Dendritic cell treated with granulocyte-macrophage colony-stimulating factor and Interleukin-4, amounts not matched to agents 40 ng/mL and 50 ng/mL, for 4 days (primary cell): ENCODE measurements at regions of chr18 and their contacts with region 1.

Region 1: DNA sequence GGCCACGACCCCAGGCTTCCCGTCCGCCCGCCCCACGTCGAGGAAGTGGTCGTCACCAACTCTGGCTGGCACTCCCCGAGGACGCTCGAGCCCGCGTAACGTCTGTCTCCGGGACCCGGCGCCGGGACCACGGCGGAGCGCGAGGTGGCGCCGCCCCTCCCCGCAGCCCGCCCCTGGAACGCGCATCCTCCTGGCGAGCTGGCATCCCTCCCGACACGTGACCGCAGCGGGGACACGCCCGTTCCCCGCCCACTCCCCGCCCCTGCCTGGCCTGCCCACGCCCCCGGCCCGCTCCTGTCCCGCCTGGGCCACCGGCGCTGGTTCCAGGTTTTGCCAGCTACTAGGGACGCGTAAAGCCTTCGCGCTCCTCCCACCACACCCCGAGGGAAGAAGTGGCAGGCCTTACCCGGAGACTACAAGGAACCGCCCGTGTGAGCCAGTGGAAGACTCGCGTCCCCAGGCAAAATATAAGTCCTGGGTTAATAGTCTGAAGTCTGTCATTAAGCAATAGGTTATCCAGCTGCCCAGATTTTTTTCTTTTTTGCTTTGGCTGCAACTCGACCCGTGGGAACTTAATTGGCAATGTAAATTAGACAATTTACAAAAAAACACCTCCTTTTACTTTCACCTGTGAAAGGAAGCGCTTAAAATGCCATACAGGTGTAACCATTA is at the start of gene OSBPL1A:
- H3K4me3 Mint-ChIP-seq: peak within 1 kb of the TSS; percentile 77
- H3K27ac Mint-ChIP-seq: peak within 1 kb of the TSS; percentile 85
- H3K4me1 Mint-ChIP-seq: peaks cover 16% of the 10 kb centered on the region
- H3K27me3 Mint-ChIP-seq: no peaks in the 10 kb centered on the region

Region 2: DNA sequence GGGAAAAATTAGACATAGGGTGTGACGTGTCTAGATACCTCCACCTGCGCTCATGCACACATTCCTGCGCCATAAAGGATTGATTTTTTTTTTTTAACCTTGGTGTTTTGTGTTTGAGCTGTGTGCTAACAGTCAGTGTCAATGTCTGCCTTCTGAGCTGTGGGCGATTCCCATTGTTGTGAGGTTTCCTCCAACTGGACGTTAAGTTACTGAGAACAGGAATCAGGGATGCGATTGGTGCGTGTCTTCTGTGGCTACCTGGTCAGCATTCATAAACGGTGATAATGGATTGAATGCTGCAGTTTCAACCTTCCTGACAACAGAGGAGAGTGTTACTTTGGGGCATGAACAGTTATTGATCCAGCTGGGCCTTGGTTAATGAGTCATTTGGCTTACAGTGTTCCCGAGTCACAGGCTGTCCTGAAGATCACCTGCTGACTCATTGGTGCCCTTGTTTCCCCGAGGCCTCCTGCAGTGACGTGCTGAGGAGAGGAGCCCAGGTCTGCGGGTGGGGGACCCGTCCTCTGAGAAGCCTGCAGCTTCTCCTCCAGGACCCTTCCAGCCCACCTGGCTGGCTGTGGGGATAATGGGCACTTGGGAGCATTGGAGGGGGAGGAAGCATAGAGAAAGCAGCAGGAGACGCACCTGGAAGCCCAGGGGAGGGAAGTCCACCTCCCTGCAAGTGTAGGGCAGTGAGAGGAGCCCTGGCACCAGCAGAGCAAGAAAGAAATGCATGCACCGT is 284.8 kb before region 1 on chr18:
- intact Hi-C with region 1: no loop called
- H3K4me3 Mint-ChIP-seq: no peak overlapping the region
- H3K27ac Mint-ChIP-seq: no peak overlapping the region
- H3K4me1 Mint-ChIP-seq: peaks cover 10% of the 10 kb centered on the region
- H3K27me3 Mint-ChIP-seq: no peaks in the 10 kb centered on the region

Region 3: DNA sequence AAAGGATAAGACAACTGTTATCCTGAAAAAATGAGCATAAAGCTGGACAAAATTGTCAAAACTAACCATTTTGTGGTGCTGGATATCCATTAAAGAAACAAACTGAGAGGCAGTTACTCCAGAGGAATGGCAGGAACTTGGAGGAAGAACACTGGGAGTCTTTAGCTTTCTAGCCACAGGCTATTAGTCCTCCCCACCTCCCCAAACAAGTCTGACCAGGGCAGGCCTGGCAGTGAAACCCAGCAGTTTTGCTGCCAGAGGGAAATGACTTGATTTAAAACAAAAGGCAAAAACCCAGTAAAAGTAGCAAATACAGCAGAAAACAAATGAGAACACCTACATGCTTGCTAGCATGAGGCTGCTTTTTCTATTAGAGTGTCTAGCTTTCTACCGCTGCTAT is 35.1 kb before region 1 on chr18:
- intact Hi-C with region 1: loop called (anchors 5 kb)
- H3K4me3 Mint-ChIP-seq: no peak overlapping the region
- H3K27ac Mint-ChIP-seq: no peak overlapping the region
- H3K4me1 Mint-ChIP-seq: peaks cover 7% of the 10 kb centered on the region
- H3K27me3 Mint-ChIP-seq: no peaks in the 10 kb centered on the region

Region 4: DNA sequence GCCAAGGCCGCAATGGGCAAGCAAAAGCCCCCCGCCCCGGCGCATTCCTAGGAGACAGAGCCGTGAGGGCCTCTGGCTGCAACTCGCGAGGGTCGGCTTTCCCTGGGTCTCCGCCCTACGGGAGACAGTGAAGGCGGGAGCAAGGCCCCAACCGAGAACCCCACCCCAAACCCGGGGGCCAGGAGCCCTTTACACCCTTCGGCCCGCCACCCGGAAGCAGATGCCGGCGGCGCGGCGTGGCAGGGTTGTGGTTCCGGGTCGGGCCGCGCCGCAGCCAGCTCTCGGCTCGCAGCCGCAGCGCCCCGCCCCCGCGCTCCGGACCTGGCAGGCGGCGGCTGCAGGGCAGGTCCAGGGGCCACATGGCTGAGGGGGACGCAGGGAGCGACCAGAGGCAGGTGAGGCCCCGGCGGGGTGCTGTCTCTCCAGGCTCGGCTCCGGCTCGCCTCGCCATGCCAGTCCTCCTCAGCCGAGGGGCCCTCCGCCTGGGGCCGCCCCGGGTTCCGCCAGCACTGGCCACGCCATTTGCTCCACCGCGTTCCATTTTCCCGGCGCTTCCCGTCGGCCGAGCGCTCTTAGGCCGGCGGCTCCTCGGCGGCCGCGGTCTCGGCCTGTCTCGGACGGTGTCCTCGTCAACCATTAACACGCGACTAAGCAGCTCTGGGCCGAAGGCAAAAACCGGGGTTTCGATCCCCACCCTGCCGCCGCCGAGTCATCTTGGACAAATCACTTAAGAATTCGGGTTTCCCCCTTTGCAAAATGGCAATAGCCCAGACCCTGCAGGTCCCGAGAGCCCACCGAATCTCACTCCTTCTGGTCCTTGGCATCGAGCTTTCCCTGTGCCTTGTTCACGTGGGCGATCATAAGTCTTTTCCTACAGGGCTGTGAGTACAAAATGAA is 28.8 kb after region 1 on chr18 and contains the start of gene IMPACT:
- intact Hi-C with region 1: loop called (anchors 2 kb)
- H3K4me3 Mint-ChIP-seq: peak within 1 kb of the TSS; percentile 97
- H3K27ac Mint-ChIP-seq: peak within 1 kb of the TSS; percentile 95
- H3K4me1 Mint-ChIP-seq: peaks cover 30% of the 10 kb centered on the region
- H3K27me3 Mint-ChIP-seq: peaks cover 17% of the 10 kb centered on the region